ENCODE measurements at regions of chr3 and their contacts with region 1.

Region 1: DNA sequence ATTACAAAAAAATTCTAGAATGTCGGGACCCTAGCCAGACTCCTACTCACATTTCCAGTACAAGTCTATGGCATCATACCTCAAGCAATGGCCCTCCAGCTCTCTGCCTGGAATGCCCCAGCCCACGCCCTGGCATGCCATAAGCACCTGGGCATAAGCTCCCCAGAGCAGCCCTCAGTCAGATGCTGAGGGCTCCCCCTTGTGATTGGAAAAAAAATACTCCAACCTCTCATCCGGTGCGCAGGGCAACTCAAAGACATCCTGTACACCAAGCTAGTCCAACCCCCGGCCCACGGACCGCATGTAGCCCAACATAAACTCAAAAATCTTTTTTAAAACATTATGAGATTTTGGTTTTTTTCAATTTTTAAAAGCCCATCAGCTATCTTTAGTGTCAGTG is 115.4 kb downstream of the NEK10 start:
- DNase-seq: peak; percentile 51

Region 2: GRCh38 chr3:27134165-27134796 is 119.5 kb before region 1 on chr3:
- CTCF ChIA-PET with region 1: interaction called, 19 read pairs
- POLR2A ChIA-PET with region 1: no interaction called
- DNase-seq: peak; percentile 73

Region 3: GRCh38 chr3:27281671-27282150 is 27.9 kb after region 1 on chr3:
- CTCF ChIA-PET with region 1: no interaction called
- POLR2A ChIA-PET with region 1: no interaction called
- DNase-seq: no peak

Measured in HEK293T (cell line).